Prostate gland (tissue), 2 donors: ENCODE measurements at regions of chr7 and their contacts with region 1.

Region 1: GRCh38 chr7:102859084-102859798 is 53.6 kb upstream of the LRRC17 start:
- DNase-seq: no peak
- H3K4me3 ChIP-seq: no peak overlapping the region
- H3K27ac ChIP-seq: peak overlapping the region in 1 of 2 donors; percentile 8
- H3K4me1 ChIP-seq: no peaks in the 10 kb centered on the region
- H3K27me3 ChIP-seq: no peaks in the 10 kb centered on the region
- CTCF ChIP-seq: no peak
- POLR2A ChIP-seq: no peak

Region 2: DNA sequence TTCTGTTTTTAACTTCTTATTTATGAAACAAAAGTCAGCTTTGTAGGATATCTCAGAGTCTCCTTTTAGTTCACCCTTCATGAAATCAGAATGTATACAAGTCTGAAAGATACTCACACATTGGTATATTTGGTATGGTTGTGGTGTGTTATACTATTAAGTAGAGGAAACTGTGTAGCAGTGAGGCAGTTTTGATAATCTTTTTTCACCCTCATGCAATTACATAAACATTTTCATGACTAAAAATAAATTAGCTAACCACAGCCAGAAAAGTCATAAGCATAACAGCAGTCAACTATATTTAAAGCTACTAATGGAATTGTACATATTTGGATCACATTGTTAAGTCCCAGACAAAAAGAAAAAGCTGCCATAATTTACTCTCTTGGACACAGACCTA is 48.3 kb before region 1 on chr7:
- intact Hi-C with region 1: no loop called
- DNase-seq: no peak
- H3K4me3 ChIP-seq: no peak overlapping the region
- H3K27ac ChIP-seq: no peak overlapping the region
- H3K4me1 ChIP-seq: no peaks in the 10 kb centered on the region
- H3K27me3 ChIP-seq: no peaks in the 10 kb centered on the region
- CTCF ChIP-seq: no peak
- POLR2A ChIP-seq: no peak

Region 3: GRCh38 chr7:102912742-102913141 is 53.5 kb after region 1 on chr7 and contains the start of gene LRRC17:
- intact Hi-C with region 1: loop called (anchors 10 kb)
- DNase-seq: no peak
- H3K4me3 ChIP-seq: peak within 1 kb of the TSS in 1 of 2 donors; percentile 2
- H3K27ac ChIP-seq: no peak within 1 kb of the TSS
- H3K4me1 ChIP-seq: no peaks in the 10 kb centered on the region
- H3K27me3 ChIP-seq: no peaks in the 10 kb centered on the region
- CTCF ChIP-seq: no peak
- POLR2A ChIP-seq: no peak
- total RNA-seq, gene LRRC17: 1.0 to 9.8 TPM

Region 4: DNA sequence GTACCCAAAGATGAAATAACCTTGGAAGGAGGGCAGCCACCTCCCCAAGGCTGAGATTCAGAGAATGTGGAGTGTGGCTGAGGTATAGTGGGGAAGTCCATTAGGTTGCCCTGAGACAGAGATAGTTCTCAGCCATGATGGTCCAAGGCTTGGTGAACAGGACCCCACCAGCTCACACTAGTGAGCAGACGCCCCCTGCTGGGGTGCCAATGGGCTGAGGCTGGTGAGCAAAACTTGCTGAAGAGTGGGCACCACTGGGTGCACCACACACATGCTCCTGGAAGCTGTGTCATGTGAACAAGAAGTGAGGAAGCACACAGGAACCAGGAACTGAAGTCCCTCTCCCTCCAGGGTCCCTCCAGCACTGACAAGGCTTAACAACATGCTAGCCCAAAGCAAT is 206.4 kb after region 1 on chr7:
- intact Hi-C with region 1: loop called (anchors 10 kb)
- DNase-seq: no peak
- H3K4me3 ChIP-seq: no peak overlapping the region
- H3K27ac ChIP-seq: no peak overlapping the region
- H3K4me1 ChIP-seq: no peaks in the 10 kb centered on the region
- H3K27me3 ChIP-seq: no peaks in the 10 kb centered on the region
- CTCF ChIP-seq: peak in 2 of 4 experiments; percentile 8 to 24
- POLR2A ChIP-seq: no peak